ENCODE measurements at regions of chr6 and their contacts with region 1.

Region 1: DNA sequence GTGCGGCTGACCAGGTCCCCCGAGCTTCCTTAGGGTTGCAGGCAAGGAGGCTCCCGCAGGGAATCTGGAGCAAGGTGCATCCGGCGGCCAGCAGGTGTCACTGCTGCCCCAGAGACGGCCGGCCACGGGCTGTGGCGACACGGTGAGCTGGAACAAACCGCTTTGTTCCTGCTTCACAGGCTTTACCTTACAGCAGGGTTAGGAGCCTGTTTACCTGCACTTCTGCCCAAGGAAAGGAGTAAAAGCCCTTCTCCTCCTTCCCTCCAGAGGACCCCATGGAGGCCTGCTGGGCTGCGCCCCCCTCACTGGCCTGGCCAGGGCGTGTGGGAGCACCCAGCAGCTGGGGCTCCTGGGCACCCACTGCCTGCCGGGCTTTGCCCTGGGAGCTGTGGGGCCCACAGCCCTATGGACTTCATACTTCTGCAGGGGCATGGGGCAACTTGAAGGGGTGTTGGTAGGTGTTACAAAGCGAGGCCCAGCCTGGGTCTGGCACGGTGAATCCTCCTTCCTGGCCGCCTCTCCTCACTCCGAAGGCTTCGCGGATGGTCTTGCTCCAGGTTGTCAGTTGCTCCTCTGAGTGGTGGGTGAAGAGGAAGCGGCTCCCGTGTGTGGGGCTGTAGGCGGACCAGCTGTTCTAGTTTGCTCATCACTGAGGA is 88.4 kb downstream of the CDC5L start:
- DNase-seq: peak; percentile 87
- CTCF ChIP-seq: peak; percentile 91

Region 2: DNA sequence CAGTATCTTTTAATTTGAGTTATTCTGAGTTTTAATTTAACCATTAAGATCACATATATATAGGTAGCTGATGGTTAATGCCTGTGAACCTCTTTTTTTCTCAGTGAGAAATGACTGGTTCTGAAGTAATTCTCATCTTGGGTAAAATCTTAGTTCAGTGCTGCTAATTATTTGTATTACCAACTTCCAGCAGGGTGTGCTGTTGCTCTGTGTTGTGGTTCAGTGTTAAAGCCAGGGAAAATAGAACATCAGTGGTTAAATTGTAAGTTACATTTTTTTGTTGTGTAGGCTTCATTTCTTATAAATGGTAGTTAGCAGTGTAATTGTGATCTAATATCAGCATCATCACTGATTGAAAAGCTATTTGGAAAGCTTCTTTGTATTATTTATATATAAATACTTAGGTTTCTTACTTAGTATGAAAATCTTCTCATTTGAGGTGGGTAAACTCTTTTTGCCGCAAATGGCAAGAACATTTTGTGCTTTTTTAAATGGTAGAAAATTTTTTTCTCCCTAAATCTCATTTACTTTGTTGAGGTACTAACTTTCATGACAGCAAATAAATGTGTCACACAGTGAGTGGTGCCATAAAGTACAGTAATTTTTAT is 44.7 kb before region 1 on chr6:
- CTCF ChIA-PET with region 1: interaction called, 13 read pairs
- POLR2A ChIA-PET with region 1: no interaction called
- DNase-seq: peak; percentile 42
- CTCF ChIP-seq: peak; percentile 72

Region 3: GRCh38 chr6:44456070-44456965 is 19.6 kb before region 1 on chr6:
- CTCF ChIA-PET with region 1: interaction called, 83 read pairs
- POLR2A ChIA-PET with region 1: no interaction called
- DNase-seq: peak; percentile 78
- CTCF ChIP-seq: peak; percentile 70

Region 4: GRCh38 chr6:44464527-44465310 is 11.2 kb before region 1 on chr6:
- CTCF ChIA-PET with region 1: interaction called, 83 read pairs
- POLR2A ChIA-PET with region 1: no interaction called
- DNase-seq: no peak
- CTCF ChIP-seq: no peak

Region 5: GRCh38 chr6:44489910-44490604 is 14.2 kb after region 1 on chr6:
- CTCF ChIA-PET with region 1: interaction called, 38 read pairs
- POLR2A ChIA-PET with region 1: no interaction called
- DNase-seq: no peak
- CTCF ChIP-seq: no peak

Region 6: GRCh38 chr6:44498436-44498835 is 22.5 kb after region 1 on chr6:
- CTCF ChIA-PET with region 1: interaction called, 17 read pairs
- POLR2A ChIA-PET with region 1: no interaction called
- DNase-seq: no peak
- CTCF ChIP-seq: no peak

Region 7: DNA sequence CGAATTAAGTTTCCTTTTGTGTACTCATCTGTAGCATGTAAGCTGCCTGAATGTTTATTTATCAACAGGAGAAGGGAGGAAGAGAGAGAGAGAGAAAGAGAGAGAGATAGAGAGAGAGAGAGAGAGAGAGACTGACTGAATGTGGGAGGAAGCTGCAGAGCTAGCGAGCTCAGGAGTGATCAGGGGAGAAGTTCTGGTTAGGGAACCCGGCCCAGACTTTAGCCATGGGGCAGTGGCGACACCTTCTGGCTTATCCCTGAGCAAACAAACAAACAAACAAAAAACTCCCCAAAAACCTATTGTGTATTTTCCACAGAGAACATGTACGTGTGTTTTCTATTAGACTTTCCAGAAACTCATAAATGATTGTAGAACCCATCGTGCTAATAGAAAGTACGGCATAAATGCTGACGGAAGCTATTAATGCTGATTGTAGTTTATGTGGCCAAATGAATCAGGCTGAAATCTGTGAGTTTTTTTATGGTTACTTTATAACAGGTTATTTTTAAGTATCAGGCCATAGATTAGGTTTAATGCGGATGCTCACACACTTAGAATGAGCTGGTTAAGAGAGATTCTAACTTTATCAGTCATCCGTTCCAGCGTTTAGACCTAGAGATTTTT is 1446.9 kb after region 1 on chr6:
- CTCF ChIA-PET with region 1: interaction called, 51 read pairs
- POLR2A ChIA-PET with region 1: no interaction called
- DNase-seq: peak; percentile 55
- CTCF ChIP-seq: peak; percentile 63

Measured in GM10248 (cell line).